Head of caudate nucleus (tissue), 42 donors: ENCODE measurements at regions of chr13 and their contacts with region 1.

Region 1: DNA sequence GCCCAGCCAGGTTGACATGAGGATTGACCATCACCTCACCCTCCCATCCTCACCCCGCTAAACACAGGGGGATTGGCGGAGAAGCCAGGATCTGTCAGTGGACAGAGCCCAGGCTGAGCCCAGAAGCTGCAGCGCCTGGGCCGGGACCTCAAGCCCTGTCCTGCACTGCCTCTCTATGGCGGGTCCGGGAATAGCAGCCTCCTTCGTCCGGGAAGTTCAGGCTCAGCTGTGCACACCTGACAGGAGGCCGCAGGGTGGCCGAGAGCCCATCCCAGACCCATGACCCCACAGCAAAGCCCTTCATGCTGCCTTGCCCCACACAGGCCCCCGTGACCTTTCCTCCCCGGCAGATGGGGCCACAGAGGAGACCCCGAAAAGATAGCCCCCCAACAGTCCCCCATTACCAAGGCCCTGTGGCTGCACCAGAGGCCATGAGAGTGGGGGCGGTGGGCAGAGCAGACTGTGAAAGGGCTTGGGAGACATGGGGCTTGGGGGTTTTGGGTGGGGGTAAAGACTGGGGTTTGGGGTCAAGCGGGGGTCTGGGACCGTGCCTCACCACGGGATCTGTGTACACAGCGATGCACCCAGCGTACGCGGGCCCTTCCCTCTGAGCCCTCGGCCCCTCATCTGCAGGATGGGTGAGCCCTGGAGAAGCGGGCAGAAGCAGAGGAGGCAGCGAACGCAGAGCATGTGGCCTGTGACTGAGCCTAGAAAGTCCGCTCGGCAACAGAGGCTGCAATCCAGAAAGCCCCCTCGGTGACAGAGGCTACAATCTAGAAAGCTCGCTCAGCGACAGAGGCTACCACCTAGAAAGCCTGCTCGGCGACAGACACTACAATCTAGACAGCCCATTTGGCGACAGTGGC is 68.1 kb downstream of the SPACA7 start:
- DNase-seq: peak; percentile 48 to 90 (median 76)

Region 2: GRCh38 chr13:111474136-111475002 is 969.9 kb before region 1 on chr13:
- intact Hi-C with region 1: loop called (anchors 2 kb)
- DNase-seq: peak in 18 of 42 donors; percentile 7 to 66 (median 32)

Region 3: GRCh38 chr13:112346173-112346898 is 97.9 kb before region 1 on chr13:
- intact Hi-C with region 1: no loop called
- DNase-seq: no peak